ENCODE measurements at regions of chr6 and their contacts with region 1.

Region 1: DNA sequence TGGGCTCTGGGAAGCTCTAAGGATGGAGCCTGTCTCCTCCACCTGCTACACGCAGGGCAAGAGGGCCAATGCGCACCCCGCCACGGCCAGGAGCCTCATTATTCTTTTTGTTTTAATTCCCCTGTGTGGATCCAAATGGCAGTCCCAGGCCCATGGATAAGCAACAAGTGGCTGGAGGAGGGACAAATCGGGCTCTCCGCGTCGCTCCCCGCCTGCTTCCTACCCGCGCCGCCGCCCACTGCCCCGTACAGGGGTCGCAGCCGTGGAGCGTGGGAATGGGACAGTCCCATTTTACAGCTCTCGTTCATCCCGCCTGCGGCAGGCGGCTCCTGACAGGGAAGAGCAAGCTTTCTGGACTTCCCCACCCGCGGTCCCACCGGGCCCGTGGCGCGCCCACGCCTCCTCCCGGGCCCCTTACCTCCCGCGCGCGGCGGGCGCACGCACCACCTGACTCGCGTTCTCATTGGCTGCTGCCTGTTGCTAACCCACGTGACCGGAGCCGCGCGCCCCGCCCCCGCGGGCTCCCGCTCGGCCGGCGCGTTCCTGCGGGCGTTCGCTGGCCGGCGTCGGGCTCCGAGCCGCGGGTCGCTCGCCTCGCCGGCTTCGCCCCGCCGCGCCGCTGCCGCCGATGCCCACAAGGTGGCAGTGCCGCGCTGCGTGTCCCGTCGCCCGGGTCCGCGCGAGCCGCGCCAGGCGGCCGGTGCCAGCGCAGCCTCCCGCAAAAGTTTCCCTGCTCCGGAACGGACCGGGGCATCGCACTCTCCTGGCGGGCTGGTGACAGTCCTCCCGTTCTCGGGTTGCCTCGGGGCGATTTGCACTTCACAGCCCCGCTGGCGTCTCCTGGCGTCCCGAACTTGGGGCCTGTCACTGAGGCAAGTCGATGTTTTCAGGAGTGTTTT is 93.3 kb downstream of the CD83 start:
- DNase-seq: peak; percentile 88
- H3K4me3 ChIP-seq: peak overlapping the region; percentile 50 to 70 (median 61)
- H3K27ac ChIP-seq: no peak overlapping the region
- H3K4me1 ChIP-seq: no peaks in the 10 kb centered on the region
- H3K27me3 ChIP-seq: peaks cover 0 to 9% of the 10 kb centered on the region in 2 experiments
- CTCF ChIP-seq: peak; percentile 56 to 76
- POLR2A ChIP-seq: no peak

Region 2: GRCh38 chr6:14711056-14711703 is 500.3 kb after region 1 on chr6:
- CTCF ChIA-PET with region 1: no interaction called
- POLR2A ChIA-PET with region 1: no interaction called
- dilution Hi-C with region 1: no loop called
- intact Hi-C with region 1: loop called (anchors 10 kb)
- DNase-seq: no peak
- H3K4me3 ChIP-seq: no peak overlapping the region
- H3K27ac ChIP-seq: no peak overlapping the region
- H3K4me1 ChIP-seq: no peaks in the 10 kb centered on the region
- H3K27me3 ChIP-seq: no peaks in the 10 kb centered on the region
- CTCF ChIP-seq: no peak
- POLR2A ChIP-seq: no peak

Region 3: GRCh38 chr6:14876778-14877613 is 666.1 kb after region 1 on chr6:
- CTCF ChIA-PET with region 1: no interaction called
- POLR2A ChIA-PET with region 1: no interaction called
- dilution Hi-C with region 1: no loop called
- intact Hi-C with region 1: loop called (anchors 2 kb)
- DNase-seq: peak; percentile 88
- H3K4me3 ChIP-seq: no peak overlapping the region
- H3K27ac ChIP-seq: peak overlapping the region; percentile 49
- H3K4me1 ChIP-seq: peaks cover 37% of the 10 kb centered on the region
- H3K27me3 ChIP-seq: peaks cover 0 to 3% of the 10 kb centered on the region in 2 experiments
- CTCF ChIP-seq: no peak
- POLR2A ChIP-seq: no peak

Region 4: DNA sequence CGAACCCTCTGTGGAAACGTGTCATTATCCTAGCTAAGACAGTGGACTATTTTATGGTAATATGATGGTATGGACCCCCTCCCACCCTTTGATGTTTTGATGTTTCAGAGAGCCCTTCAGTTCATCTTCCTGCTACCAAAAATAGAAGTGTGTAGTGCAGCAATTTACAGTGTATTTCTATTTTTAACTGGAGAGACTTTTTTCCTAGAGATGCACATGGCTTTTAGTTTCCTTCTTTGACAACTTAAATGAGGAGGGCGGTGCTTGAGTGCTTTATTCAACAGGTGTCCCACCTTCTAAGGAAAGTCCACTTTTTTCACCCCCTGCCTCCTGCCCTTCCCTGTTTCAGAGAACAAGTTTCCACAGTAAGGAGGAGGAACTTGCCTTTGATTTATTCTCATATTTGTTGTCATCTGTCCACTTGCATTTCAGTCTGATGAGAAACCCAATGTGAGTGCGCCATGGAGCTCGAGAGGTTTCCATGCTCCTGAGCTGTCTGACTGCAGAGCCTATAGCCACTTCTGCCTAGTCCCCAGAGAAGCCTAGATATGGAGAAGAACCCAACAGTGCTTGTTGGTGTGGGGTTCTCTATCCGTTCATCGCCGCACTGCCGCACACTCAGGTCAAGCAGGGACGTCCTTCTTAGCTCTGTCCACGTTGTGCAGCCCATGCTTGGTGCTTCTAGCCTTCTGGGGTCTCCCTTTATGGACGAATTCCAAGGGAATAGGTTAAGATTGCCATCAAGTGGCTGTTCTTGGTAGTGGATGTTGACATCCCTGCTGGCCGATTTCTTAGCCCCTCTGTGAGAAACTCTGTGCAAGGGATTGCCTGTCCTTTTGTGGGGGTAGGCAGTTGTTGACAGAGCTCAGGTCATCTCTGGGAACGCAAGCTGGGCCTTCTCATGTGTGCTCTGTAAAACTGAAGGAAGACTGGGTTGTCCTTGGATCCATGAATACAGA is 1179.1 kb after region 1 on chr6:
- CTCF ChIA-PET with region 1: interaction called, 21 read pairs
- POLR2A ChIA-PET with region 1: no interaction called
- dilution Hi-C with region 1: no loop called
- intact Hi-C with region 1: loop called (anchors 1 kb)
- DNase-seq: peak; percentile 73
- H3K4me3 ChIP-seq: no peak overlapping the region
- H3K27ac ChIP-seq: no peak overlapping the region
- H3K4me1 ChIP-seq: no peaks in the 10 kb centered on the region
- H3K27me3 ChIP-seq: no peaks in the 10 kb centered on the region
- CTCF ChIP-seq: peak; percentile 60 to 71
- POLR2A ChIP-seq: no peak

Region 5: DNA sequence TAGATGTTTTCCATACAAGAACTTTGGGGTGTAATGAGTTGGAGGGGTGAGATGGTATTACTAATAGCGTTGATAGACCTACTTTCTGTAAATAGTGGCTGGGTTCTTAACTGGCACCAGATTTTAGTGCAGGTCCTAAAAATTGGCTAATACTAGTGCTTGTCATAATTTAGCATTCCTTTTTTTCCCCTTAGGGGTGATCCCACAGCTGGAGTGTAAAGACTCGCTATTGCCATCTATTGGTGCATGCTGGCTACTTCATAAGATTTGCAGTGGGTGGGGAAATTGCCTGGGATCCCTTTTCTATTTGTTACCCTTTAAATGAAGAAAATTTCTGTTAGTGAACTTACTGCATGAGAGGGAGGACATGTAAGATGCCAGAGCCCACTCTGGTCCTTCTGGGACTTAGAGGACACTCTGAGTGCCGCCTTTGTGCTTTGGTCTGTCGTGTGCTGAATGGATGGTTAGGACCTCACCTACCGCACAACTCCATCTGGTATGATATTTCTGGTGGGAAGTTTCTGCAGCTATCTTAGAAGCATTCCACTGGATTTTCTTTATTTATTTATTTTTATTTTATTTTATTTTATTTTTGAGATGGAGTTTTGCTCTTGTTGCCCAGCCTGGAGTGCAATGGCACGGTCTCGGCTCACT is 1230.4 kb after region 1 on chr6:
- CTCF ChIA-PET with region 1: interaction called, 4 read pairs
- POLR2A ChIA-PET with region 1: no interaction called
- dilution Hi-C with region 1: no loop called
- intact Hi-C with region 1: loop called (anchors 1 kb)
- DNase-seq: peak; percentile 63
- H3K4me3 ChIP-seq: no peak overlapping the region
- H3K27ac ChIP-seq: no peak overlapping the region
- H3K4me1 ChIP-seq: peaks cover 5% of the 10 kb centered on the region
- H3K27me3 ChIP-seq: no peaks in the 10 kb centered on the region
- CTCF ChIP-seq: peak; percentile 73 to 75
- POLR2A ChIP-seq: no peak

Region 6: DNA sequence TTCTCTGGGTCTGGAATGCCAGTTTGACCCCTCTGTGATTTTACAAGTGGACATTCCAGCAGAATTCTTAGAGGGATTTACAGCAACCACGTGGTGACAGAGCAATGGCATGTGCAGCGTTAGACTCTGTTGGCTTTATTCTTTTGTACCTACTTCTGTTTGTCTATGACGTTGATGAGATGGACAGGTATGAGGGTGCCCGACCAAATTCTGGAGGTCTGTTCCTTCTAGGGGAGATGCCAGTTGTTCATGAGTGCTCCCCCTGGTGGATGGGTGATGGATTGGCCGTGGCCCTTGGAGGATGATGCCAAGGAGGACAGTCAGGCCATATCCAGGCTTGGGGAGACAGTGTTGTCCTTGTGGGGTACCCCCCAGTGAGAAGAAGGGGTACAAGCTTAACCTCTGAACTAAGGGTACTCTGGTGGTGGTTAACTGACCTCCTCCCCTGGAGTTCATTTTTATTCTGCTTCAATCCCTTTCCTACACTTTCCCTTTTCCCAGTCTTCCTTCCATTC is 1253.4 kb after region 1 on chr6:
- CTCF ChIA-PET with region 1: interaction called, 8 read pairs
- POLR2A ChIA-PET with region 1: no interaction called
- dilution Hi-C with region 1: no loop called
- intact Hi-C with region 1: loop called (anchors 1 kb)
- DNase-seq: peak; percentile 22
- H3K4me3 ChIP-seq: no peak overlapping the region
- H3K27ac ChIP-seq: no peak overlapping the region
- H3K4me1 ChIP-seq: no peaks in the 10 kb centered on the region
- H3K27me3 ChIP-seq: no peaks in the 10 kb centered on the region
- CTCF ChIP-seq: peak; percentile 61 to 73
- POLR2A ChIP-seq: no peak

Region 7: DNA sequence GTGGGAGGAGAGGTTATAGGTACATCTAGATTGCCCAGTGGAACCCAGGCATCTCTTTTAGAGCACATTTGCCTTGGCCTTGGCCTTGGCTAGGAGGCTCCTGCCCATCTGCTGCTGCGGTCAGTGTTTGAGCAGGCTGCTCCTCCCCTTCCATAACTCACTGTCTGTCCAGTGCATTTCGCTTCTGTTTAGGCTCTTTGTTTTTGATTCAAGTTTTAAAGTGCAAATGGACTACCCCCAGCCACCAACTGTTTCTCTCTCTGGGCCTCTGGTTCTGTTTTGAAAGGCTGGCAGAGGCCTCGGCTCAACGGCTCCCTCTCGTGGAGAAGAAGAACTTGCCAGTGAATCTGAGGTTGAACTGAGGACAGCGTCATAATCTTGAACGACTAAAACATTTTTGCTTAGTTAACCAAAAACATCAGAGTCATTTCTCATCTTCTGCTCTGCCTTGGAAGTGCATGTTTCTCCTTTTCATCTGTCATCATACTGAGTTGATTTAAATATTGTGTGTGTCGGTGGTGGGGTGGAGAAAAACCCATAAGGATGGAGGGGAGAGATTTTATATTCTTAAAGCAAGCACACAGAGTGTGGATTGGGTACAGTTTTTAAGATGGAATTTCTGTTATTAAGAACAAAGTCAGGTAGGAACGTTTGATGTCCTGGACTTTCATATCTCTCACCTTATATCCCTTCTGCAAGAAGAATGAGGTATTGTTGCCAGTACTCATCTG is 1280.5 kb after region 1 on chr6:
- CTCF ChIA-PET with region 1: interaction called, 10 read pairs
- POLR2A ChIA-PET with region 1: no interaction called
- dilution Hi-C with region 1: no loop called
- intact Hi-C with region 1: loop called (anchors 1 kb)
- DNase-seq: peak; percentile 54
- H3K4me3 ChIP-seq: no peak overlapping the region
- H3K27ac ChIP-seq: no peak overlapping the region
- H3K4me1 ChIP-seq: no peaks in the 10 kb centered on the region
- H3K27me3 ChIP-seq: no peaks in the 10 kb centered on the region
- CTCF ChIP-seq: peak; percentile 84 to 90
- POLR2A ChIP-seq: no peak